HAP-1 (cell line): ENCODE measurements at regions of chr15 and their contacts with region 1.

Region 1: DNA sequence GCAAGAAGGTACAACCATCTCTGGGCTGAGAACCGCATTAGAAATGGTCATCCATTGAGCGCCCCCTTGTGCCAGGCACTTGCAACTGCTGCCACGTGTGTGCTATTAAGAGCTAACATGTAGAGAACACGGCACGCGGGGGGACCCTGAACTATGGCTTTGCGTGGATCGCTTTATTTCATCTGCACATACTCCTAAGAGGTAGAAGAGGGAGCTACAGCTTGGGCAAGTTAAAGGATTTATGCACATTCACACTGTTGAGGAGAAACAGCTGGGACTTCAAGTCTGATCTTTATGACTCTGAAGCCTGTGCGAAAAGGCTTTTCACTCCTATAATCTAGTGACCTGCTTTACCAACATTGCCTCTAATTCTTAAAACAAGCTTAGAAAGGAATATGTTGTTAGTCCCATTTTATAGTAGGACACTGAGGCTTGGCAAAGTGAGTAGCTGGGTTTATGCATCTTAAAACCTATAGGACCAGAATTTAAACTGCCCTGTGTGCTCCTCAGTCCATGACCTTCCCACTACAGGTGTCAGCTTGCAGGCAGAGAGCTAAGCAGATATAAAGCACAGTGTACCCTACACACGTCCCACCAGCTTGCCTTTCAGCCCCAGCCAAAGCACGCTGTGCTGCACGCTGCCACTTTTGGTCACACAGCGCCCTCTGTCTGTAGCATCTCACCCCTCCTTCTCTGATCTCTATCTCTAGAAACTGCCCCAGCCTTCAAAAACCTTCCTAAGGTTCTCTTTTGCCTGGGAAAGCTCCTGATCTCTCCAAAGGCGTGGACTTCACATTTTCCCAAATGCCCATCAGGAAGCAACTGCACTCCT is 57.8 kb downstream of the STARD5 start:
- DNase-seq: peak; percentile 95 to 97
- H3K4me3 ChIP-seq: no peak overlapping the region
- H3K4me1 ChIP-seq: peaks cover 13% of the 10 kb centered on the region
- H3K27me3 ChIP-seq: peaks cover 58% of the 10 kb centered on the region

Region 2: DNA sequence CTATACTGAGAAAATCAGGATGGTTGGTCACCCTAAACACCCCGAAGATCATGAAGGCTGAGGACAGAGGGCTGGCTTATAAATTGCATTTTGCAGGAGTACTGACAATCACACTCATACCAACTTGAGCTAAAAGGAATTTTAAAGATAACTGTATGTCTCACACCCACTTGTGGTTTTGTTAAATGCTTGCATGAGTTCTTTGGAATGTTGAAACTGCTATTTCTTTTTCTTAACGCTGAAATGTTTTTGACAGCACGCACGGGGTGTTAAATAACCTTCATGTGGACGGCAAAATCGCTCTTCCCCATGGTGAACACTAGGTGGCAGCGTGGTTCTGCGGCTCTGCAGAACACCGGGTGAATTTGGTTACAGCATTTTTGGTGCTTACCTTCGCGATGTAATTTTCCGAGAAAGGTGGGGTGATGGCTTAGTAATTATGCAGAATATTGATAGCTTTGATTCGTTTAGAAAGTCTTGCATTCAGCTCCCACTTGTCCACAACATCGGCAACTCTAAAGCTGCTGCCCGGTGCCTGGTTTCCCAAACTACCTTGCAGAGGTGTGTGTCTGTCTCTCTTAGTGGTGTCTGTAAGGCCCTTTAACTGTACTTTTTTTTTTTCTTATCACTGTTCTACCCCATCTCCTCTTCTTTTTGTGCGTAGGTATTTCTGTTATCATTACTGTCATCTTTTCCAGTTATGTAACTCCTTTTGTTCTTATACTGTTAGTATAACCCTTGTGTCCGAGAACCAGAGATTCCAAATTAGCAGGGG is 810.3 kb before region 1 on chr15:
- in situ Hi-C with region 1: loop called (anchors 5 kb)
- DNase-seq: peak; percentile 80 to 81
- H3K4me3 ChIP-seq: no peak overlapping the region
- H3K4me1 ChIP-seq: peaks cover 2% of the 10 kb centered on the region; the same call in 1 of the 2 replicates
- H3K27me3 ChIP-seq: no peaks in the 10 kb centered on the region

Region 3: GRCh38 chr15:80977627-80978036 is 288.5 kb before region 1 on chr15:
- in situ Hi-C with region 1: loop called (anchors 5 kb)
- DNase-seq: peak; percentile 90 to 93
- H3K4me3 ChIP-seq: no peak overlapping the region
- H3K4me1 ChIP-seq: no peaks in the 10 kb centered on the region; the same call in 1 of the 2 replicates
- H3K27me3 ChIP-seq: no peaks in the 10 kb centered on the region

Region 4: DNA sequence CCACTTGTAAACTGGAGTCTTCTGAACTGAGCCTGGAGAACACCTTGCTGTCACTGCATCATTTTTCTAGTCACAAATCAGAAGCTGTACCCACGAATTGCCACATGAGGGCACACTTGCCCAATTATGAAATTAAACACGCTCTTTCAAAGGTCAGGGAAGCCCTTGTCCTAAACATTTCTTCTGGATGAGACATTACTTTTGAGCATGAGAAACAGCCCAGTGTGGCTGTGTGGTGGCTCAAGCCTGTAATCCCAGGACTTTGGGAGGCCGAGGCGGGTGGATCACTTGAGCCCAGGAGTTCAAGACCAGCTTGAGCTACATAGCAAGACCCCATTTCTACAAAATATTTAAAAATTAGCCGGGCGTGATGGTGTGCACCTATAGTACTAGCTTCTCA is 159.6 kb before region 1 on chr15:
- in situ Hi-C with region 1: loop called (anchors 5 kb)
- DNase-seq: peak; percentile 69 to 72
- H3K4me3 ChIP-seq: no peak overlapping the region
- H3K4me1 ChIP-seq: peaks cover under 1% of the 10 kb centered on the region; the same call in 1 of the 2 replicates
- H3K27me3 ChIP-seq: peaks cover 39% of the 10 kb centered on the region

Region 5: GRCh38 chr15:81155375-81156218 is 110.6 kb before region 1 on chr15:
- in situ Hi-C with region 1: loop called (anchors 5 kb)
- DNase-seq: peak; percentile 46 to 48
- H3K4me3 ChIP-seq: no peak overlapping the region
- H3K4me1 ChIP-seq: no peaks in the 10 kb centered on the region
- H3K27me3 ChIP-seq: peaks cover 2% of the 10 kb centered on the region; the same call in 1 of the 2 replicates

Region 6: GRCh38 chr15:81723701-81724100 is 457.5 kb after region 1 on chr15:
- in situ Hi-C with region 1: no loop called
- DNase-seq: no peak
- H3K4me3 ChIP-seq: no peak overlapping the region
- H3K4me1 ChIP-seq: no peaks in the 10 kb centered on the region
- H3K27me3 ChIP-seq: no peaks in the 10 kb centered on the region